Esophagus squamous epithelium (tissue), 5 donors: ENCODE measurements at regions of chr17 and their contacts with region 1.

Region 1: DNA sequence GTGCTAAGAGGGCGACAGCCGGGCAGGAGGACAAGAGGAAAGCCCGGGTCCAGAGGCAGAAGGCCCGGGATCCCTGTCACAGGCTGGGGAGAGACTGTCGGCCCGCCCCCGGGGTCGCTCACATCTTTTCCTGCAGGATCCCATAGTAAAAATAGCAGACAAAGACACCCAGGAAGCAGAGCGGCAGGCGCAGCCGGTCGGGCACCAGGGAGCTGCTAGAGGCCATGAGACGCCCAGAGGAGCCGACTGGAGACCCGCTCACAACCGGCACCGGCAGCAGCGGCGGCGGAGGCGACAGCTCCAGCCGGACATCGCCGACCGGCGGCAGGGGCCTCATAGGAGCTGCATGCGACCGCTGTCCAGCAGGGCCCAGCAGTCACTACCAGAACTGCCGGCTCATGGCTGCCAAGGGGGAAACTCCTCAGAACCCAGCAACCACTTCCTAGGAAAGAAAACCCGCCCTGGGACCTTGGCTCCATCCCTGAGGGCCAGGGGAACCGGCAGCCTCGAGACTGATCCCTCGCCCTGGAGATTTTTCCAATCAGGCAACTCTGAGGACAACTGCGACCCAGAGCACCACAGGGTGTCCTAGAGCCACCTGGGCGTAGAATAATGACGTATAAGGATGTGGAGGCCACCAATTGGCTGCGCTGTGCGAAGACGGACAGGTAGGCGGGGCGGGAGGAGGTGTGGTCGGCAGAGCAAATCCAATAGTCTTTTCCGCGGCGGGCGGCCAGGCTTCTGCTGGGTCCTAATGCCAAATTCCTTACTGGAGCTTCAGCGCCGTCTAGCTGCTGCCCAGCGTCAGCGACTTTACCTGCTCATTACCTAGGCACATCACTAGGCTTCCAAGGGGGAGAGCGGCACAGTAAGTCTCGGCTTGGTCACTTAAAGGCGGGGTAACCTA is at the start of gene SLC35B1:
- DNase-seq: peak; percentile 96
- H3K4me3 ChIP-seq: peak within 1 kb of the TSS; percentile 75 to 94 (median 90)
- H3K27ac ChIP-seq: peak within 1 kb of the TSS; percentile 91 to 96 (median 92)
- H3K4me1 ChIP-seq: peaks cover 11 to 51% (median 21%) of the 10 kb centered on the region in 3 donors
- H3K27me3 ChIP-seq: no peaks in the 10 kb centered on the region
- CTCF ChIP-seq: peak; percentile 67 to 86 (median 83)
- POLR2A ChIP-seq: peak in 3 of 4 donors; percentile 40 to 57 (median 52)
- total RNA-seq, gene SLC35B1: 32.4 to 68.5 (median 36.2) TPM

Region 2: GRCh38 chr17:49779739-49780231 is 71.9 kb after region 1 on chr17:
- intact Hi-C with region 1: loop called (anchors 5 kb)
- DNase-seq: no peak
- H3K4me3 ChIP-seq: no peak overlapping the region
- H3K27ac ChIP-seq: peak overlapping the region in 3 of 4 donors; percentile 46 to 80 (median 59)
- H3K4me1 ChIP-seq: peaks cover 0 to 63% (median 39%) of the 10 kb centered on the region in 3 donors
- H3K27me3 ChIP-seq: no peaks in the 10 kb centered on the region
- CTCF ChIP-seq: peak; percentile 22 to 64 (median 47)
- POLR2A ChIP-seq: no peak